ENCODE measurements at regions of chr18 and their contacts with region 1.

Region 1: GRCh38 chr18:48445540-48445939 is 36.4 kb upstream of the ZBTB7C start:
- DNase-seq: peak; percentile 49 to 80 (median 64)
- ATAC-seq: peak; percentile 82
- H3K4me3 ChIP-seq: no peak overlapping the region
- H3K4me3 Mint-ChIP-seq: no peak overlapping the region
- H3K27ac ChIP-seq: no peak overlapping the region
- H3K27ac Mint-ChIP-seq: no peak overlapping the region
- H3K4me1 ChIP-seq: peaks cover 6% of the 10 kb centered on the region
- H3K4me1 Mint-ChIP-seq: peaks cover 11% of the 10 kb centered on the region
- H3K27me3 ChIP-seq: peaks cover 9 to 14% of the 10 kb centered on the region in 2 experiments
- H3K27me3 Mint-ChIP-seq: peaks cover 67% of the 10 kb centered on the region
- CTCF ChIP-seq: peak; percentile 83

Region 2: DNA sequence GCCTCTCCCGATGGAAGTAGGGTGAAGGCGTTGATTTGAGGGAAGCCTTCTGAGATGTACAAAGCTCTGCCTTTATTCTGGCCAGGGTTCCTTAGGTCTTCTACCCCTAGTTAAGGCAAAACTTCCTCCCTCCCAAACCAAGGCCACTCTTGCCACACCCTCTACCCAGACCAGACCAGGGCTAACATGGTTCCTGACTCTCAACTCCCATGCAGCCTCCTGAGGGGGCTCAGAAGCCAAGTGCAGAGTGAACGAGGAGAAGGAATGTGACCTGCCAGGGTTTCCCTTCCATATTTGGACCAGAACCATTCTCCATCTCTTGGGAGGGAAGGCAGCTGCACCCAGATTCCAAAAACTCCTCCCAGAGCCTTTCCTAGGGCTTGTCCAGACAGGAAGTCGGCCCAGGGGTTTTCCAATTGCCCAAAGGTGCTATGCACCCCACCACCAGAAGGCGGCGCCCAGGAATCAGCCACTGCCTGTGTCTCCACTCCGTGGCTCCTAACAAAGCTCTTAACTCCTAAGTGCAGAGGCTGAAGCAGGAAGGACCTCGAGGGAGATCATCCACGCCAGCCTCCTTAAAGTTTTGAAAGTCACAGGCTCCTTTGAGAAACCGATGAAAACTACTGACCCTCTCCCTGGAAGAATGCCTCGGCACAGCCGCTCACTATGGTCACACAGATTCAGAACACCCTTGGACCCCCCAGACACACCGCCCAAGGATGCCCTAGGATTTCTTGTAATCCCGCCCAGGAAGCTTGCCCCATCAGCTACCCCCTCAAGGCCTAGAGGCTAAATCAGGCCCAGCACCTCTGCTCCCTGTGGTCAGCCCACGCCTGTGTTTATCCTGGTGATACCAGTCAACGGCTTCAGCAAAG is 672.9 kb before region 1 on chr18:
- CTCF ChIA-PET with region 1: no interaction called
- POLR2A ChIA-PET with region 1: no interaction called
- intact Hi-C with region 1: loop called (anchors 1 to 5 kb)
- DNase-seq: peak; percentile 27 to 68 (median 47)
- ATAC-seq: no peak
- H3K4me3 ChIP-seq: no peak overlapping the region
- H3K4me3 Mint-ChIP-seq: no peak overlapping the region
- H3K27ac ChIP-seq: no peak overlapping the region
- H3K27ac Mint-ChIP-seq: no peak overlapping the region
- H3K4me1 ChIP-seq: no peaks in the 10 kb centered on the region
- H3K4me1 Mint-ChIP-seq: no peaks in the 10 kb centered on the region
- H3K27me3 ChIP-seq: no peaks in the 10 kb centered on the region
- H3K27me3 Mint-ChIP-seq: peaks cover 3% of the 10 kb centered on the region
- CTCF ChIP-seq: peak; percentile 91

Region 3: DNA sequence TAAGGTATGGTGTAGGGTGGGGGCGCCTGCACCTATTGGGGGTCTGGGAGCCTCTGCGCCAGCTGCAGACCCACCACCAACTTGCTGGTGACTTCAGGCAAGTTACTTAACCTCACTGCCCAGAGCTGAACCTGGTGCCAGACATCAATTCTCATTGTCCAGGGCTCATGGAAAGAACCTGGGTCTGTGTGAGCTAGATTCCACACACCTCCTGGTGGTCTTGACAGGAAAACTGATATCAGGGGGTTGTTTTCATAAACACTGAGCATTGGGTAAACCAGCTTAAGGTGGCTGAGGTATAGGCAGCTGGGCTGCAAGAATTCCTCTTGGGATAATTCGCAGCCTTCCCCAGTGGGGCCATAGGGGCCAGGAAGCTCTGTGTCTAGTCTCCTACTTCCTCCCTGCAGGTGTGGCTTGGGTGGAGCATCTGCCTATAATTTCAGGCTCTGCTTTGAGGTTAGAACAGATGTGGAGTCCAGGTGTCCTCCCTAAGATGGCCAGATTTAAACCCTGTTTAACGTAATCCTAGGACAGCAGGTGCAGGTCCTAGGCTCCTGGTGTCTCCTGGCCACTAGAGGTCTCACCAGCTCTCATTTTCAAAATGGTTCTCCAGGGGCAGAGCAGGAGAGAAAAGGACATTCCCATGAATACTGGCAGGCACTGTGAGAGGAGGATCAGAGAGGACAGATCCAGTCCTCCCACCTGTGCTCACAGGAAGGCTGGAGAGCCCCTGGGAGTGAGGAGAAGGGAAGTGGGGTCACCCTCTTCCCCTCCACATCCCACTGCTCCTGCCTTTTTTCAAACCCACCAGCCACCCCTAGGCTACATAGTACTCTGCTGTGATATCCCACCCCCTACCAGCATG is 414.7 kb before region 1 on chr18:
- CTCF ChIA-PET with region 1: no interaction called
- POLR2A ChIA-PET with region 1: no interaction called
- intact Hi-C with region 1: loop called in 1 of 2 experiments (anchors 5 kb)
- DNase-seq: peak in 1 of 14 experiments; percentile 25
- ATAC-seq: no peak
- H3K4me3 ChIP-seq: no peak overlapping the region
- H3K4me3 Mint-ChIP-seq: no peak overlapping the region
- H3K27ac ChIP-seq: no peak overlapping the region
- H3K27ac Mint-ChIP-seq: no peak overlapping the region
- H3K4me1 ChIP-seq: no peaks in the 10 kb centered on the region
- H3K4me1 Mint-ChIP-seq: no peaks in the 10 kb centered on the region
- H3K27me3 ChIP-seq: no peaks in the 10 kb centered on the region
- H3K27me3 Mint-ChIP-seq: peaks cover 1% of the 10 kb centered on the region
- CTCF ChIP-seq: no peak

Region 4: GRCh38 chr18:48460929-48461583 is 15.5 kb after region 1 on chr18:
- CTCF ChIA-PET with region 1: interaction called, 10 read pairs
- POLR2A ChIA-PET with region 1: interaction called, 3 read pairs
- intact Hi-C with region 1: loop called in 1 of 2 experiments (anchors 2 kb)
- DNase-seq: no peak
- ATAC-seq: no peak
- H3K4me3 ChIP-seq: no peak overlapping the region
- H3K4me3 Mint-ChIP-seq: no peak overlapping the region
- H3K27ac ChIP-seq: no peak overlapping the region
- H3K27ac Mint-ChIP-seq: no peak overlapping the region
- H3K4me1 ChIP-seq: peaks cover 17% of the 10 kb centered on the region
- H3K4me1 Mint-ChIP-seq: peaks cover 10% of the 10 kb centered on the region
- H3K27me3 ChIP-seq: peaks cover 28 to 33% of the 10 kb centered on the region in 2 experiments
- H3K27me3 Mint-ChIP-seq: peaks cover 86% of the 10 kb centered on the region
- CTCF ChIP-seq: no peak

Region 5: GRCh38 chr18:48470484-48471180 is 25.1 kb after region 1 on chr18:
- CTCF ChIA-PET with region 1: interaction called, 5 read pairs
- POLR2A ChIA-PET with region 1: no interaction called
- intact Hi-C with region 1: loop called in 1 of 2 experiments (anchors 2 kb)
- DNase-seq: no peak
- ATAC-seq: no peak
- H3K4me3 ChIP-seq: no peak overlapping the region
- H3K4me3 Mint-ChIP-seq: no peak overlapping the region
- H3K27ac ChIP-seq: no peak overlapping the region
- H3K27ac Mint-ChIP-seq: no peak overlapping the region
- H3K4me1 ChIP-seq: no peaks in the 10 kb centered on the region
- H3K4me1 Mint-ChIP-seq: no peaks in the 10 kb centered on the region
- H3K27me3 ChIP-seq: peaks cover 8 to 10% of the 10 kb centered on the region in 2 experiments
- H3K27me3 Mint-ChIP-seq: peaks cover 62% of the 10 kb centered on the region
- CTCF ChIP-seq: no peak

Region 6: DNA sequence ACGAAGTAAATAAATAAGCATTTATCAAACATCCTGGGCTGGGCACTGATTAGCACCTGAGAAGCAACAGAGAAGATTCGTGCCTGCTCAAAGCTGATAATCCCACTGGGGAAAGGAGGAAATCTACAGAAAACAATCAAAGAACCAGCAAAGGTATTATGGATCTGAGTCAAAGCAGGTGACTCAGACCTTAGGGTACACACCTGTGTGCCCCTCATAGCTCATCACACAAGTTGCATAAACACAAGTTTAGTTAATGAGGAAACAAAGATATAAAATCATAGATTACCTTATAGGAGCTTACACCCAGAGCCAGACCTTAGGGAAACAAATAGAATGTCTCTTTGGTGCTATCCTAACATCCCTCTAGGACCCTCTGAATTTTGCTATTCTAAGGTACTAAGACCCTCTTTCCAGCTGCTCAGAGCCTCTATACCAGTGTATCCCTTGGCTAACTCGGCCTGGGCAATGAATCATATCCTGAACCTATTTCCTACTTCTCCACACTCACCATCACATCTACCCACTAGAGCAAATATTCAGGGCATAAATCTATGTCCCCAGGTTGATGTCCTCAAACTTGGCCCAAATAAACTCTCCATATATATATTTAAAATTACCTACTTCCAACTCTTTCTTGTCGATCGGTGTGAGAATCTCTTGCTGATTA is 74.0 kb after region 1 on chr18:
- CTCF ChIA-PET with region 1: no interaction called
- POLR2A ChIA-PET with region 1: no interaction called
- intact Hi-C with region 1: no loop called
- DNase-seq: no peak
- ATAC-seq: no peak
- H3K4me3 ChIP-seq: no peak overlapping the region
- H3K4me3 Mint-ChIP-seq: no peak overlapping the region
- H3K27ac ChIP-seq: no peak overlapping the region
- H3K27ac Mint-ChIP-seq: no peak overlapping the region
- H3K4me1 ChIP-seq: no peaks in the 10 kb centered on the region
- H3K4me1 Mint-ChIP-seq: no peaks in the 10 kb centered on the region
- H3K27me3 ChIP-seq: peaks cover 12 to 15% of the 10 kb centered on the region in 2 experiments
- H3K27me3 Mint-ChIP-seq: peaks cover 72% of the 10 kb centered on the region
- CTCF ChIP-seq: no peak

Region 7: GRCh38 chr18:48663931-48664847 is 218.6 kb after region 1 on chr18:
- CTCF ChIA-PET with region 1: no interaction called
- POLR2A ChIA-PET with region 1: no interaction called
- intact Hi-C with region 1: loop called in 1 of 2 experiments (anchors 10 kb)
- DNase-seq: peak; percentile 24 to 61 (median 40)
- ATAC-seq: no peak
- H3K4me3 ChIP-seq: no peak overlapping the region
- H3K4me3 Mint-ChIP-seq: no peak overlapping the region
- H3K27ac ChIP-seq: no peak overlapping the region
- H3K27ac Mint-ChIP-seq: no peak overlapping the region
- H3K4me1 ChIP-seq: peaks cover 4% of the 10 kb centered on the region
- H3K4me1 Mint-ChIP-seq: no peaks in the 10 kb centered on the region
- H3K27me3 ChIP-seq: no peaks in the 10 kb centered on the region
- H3K27me3 Mint-ChIP-seq: peaks cover 3% of the 10 kb centered on the region
- CTCF ChIP-seq: peak; percentile 65